GM10248 (cell line): ENCODE measurements at regions of chr3 and their contacts with region 1.

Region 1: GRCh38 chr3:58349792-58350626 is 17.3 kb downstream of the PXK start:
- DNase-seq: peak; percentile 65
- CTCF ChIP-seq: no peak

Region 2: DNA sequence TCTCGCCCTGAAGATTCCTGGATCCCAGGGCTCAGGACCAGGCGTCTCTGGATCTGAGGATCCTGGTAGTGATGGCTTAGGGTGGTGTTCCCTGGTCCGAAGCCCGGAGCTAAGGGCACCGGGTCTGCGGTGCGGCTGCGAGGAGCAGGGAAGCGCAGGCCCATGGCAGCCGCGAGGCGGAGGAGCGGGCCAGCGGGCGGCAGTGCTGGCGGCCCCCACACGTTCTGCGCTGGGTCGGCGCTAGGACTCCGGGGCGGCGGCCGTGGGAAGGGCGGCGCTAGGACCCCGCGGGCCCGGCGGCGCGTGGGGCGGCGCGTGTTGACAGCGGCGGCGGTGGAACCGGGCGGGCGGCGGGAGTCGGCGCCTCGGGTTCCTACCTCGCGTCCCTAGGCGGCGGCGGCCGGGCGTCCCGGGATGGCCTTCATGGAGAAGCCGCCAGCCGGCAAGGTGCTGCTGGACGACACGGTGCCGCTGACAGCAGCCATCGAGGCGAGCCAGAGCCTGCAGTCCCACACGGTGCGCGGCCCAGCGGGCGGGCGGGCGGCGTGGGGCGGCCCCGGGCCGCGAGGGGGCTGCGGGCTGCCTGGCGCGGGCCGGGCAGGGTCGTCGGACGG is 17.3 kb before region 1 on chr3 and contains the start of gene PXK:
- CTCF ChIA-PET with region 1: interaction called, 101 read pairs
- POLR2A ChIA-PET with region 1: no interaction called
- DNase-seq: peak; percentile 84
- CTCF ChIP-seq: peak; percentile 41

Region 3: GRCh38 chr3:58640700-58641372 is 290.8 kb after region 1 on chr3:
- CTCF ChIA-PET with region 1: no interaction called
- POLR2A ChIA-PET with region 1: no interaction called
- DNase-seq: peak; percentile 82
- CTCF ChIP-seq: peak; percentile 87